ENCODE measurements at regions of chrX and their contacts with region 1.

Region 1: GRCh38 chrX:14029425-14030173 is at the start of gene GEMIN8:
- DNase-seq: peak; percentile 88
- H3K4me3 ChIP-seq: peak within 1 kb of the TSS; percentile 90
- H3K27ac ChIP-seq: peak within 1 kb of the TSS; percentile 74
- H3K4me1 ChIP-seq: peaks cover 36% of the 10 kb centered on the region
- CTCF ChIP-seq: no peak
- total RNA-seq, gene GEMIN8: 23.2 and 30.1 TPM in 2 replicates

Region 2: DNA sequence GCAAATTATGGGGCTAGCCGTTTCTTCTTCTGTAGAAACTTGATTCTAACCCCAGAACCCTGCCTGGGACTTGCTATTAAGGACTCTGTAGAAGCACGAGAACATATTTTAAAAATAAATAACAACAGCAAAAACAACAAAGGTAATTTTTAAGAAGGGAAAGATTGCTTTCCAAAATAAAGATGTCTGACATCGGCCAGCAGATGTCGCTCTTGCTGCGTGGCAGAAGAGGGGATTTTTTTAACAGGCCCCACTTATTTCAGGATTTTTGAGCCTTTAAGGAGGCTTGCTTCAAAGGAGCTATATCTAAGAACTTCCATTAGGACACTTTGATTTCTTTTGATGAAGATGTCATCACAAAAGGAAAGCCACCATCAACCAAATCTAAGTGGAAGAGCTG is 523.0 kb before region 1 on chrX:
- CTCF ChIA-PET with region 1: interaction called, 3 read pairs
- POLR2A ChIA-PET with region 1: no interaction called
- intact Hi-C with region 1: loop called (anchors 1 kb)
- DNase-seq: peak; percentile 51
- H3K4me3 ChIP-seq: no peak overlapping the region
- H3K27ac ChIP-seq: no peak overlapping the region
- H3K4me1 ChIP-seq: no peaks in the 10 kb centered on the region
- CTCF ChIP-seq: peak; percentile 80

Region 3: DNA sequence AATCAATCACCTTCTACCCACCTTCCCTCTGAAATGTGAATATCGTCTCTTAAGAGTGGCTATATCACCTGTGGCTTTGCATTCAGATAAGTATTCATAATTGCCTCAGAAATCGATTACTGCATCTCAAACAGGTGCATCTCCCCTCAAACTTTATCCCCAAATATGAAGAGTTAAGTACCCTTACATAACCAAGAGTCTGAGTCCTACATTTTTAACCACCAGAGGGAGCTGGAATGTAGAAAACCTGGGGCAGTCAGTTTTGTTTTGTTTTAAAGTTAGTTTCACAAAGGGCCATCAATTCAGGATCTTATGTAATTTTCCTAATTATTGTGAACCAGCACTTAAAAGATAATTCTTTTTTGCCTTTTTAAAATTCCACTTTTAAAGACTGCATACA is 371.0 kb before region 1 on chrX:
- CTCF ChIA-PET with region 1: no interaction called
- POLR2A ChIA-PET with region 1: interaction called, 3 read pairs
- intact Hi-C with region 1: loop called (anchors 1 kb)
- DNase-seq: peak; percentile 65
- H3K4me3 ChIP-seq: peak overlapping the region; percentile 44
- H3K27ac ChIP-seq: peak overlapping the region; percentile 40
- H3K4me1 ChIP-seq: peaks cover 20% of the 10 kb centered on the region
- CTCF ChIP-seq: peak; percentile 85

Region 4: GRCh38 chrX:13759152-13759718 is 270.4 kb before region 1 on chrX:
- CTCF ChIA-PET with region 1: no interaction called
- POLR2A ChIA-PET with region 1: interaction called, 9 read pairs
- intact Hi-C with region 1: loop called (anchors 2 kb)
- DNase-seq: peak; percentile 83
- H3K4me3 ChIP-seq: peak overlapping the region; percentile 55
- H3K27ac ChIP-seq: peak overlapping the region; percentile 100
- H3K4me1 ChIP-seq: peaks cover 78% of the 10 kb centered on the region
- CTCF ChIP-seq: no peak

Region 5: DNA sequence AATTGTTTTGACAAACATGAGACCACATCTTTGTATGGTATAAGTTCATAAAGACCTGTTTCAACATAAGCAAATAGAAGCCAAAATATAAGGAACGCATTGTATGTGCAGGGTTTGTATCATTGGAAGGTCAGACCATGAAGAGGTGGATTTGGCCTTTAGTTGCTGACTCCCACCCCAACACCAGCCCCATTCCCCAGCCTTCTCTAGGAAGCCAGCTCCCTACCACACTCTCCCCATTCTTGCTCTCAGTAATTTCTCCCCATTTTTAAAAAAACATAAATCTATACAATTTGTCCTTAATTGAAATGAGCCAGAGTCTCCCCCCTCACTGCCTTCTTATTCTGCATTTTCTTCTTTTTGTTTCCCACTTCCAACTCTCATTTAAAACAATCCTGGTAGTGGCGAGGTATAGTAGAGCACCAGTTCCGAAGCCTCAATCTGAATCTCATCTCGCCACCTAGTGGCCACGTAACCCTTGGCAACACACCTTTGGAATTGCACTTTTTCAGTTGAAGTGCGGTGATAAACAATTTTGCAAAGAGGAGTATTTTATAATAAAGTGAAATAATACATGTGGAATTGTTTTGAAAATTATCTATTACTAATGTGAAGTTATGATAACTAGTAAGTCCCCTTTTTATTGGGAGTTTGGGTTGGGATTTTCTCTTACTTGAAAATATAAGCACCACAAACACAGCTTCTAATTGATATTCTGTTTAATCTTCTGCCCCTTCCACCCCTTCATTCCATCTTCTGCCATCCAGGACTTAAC is 1113.6 kb after region 1 on chrX:
- CTCF ChIA-PET with region 1: no interaction called
- POLR2A ChIA-PET with region 1: no interaction called
- intact Hi-C with region 1: loop called (anchors 10 kb)
- DNase-seq: peak; percentile 46
- H3K4me3 ChIP-seq: no peak overlapping the region
- H3K27ac ChIP-seq: no peak overlapping the region
- H3K4me1 ChIP-seq: no peaks in the 10 kb centered on the region
- CTCF ChIP-seq: peak; percentile 85

Measured in OCI-LY7 (cell line).